Aorta (tissue), 5 donors: ENCODE measurements at regions of chr14 and their contacts with region 1.

Region 1: DNA sequence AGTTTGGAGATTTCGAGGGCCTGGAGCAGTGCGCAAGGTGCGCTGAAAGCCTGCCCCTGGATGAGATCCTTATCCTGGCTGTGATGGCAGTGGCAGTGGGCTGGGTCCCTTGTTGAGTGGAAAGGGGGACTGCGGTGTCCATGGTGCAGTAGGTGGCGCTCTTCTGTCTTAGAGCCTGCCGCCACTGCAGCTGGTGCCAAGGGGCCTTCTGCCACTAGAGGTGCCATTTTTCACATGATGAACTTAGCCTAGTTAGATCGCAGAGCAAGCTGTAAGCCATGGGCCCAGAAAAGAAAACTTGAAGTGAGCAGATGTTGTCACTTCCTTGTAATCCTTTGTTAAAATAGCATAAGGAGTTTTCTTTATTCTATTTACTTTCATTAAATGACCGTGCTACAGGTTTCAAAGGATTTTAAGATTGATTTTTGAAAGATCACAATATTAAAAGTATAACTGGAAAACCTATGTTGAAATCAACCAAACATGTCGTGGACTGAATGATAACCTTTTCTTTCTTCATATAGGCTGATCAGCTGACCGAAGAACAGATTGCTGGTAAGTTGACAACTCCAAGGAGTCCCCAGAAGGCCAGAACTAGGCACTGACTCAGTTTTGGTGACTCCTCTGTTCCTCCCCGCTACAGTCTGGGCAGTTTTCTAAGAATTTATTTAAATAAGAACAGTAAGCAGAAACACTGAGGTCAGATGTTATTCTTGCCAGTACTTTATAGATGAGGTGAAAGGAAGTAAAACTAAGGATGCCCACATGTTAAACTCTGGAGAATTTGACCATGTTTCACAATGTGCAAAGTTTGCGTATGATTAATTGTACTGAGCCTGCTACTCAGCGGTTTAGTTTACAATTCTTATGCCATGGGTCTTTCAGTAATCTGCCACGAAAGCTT is 3.0 kb downstream of the CALM1 start:
- DNase-seq: peak; percentile 94
- ATAC-seq: peak; percentile 86
- H3K4me3 ChIP-seq: peak overlapping the region; percentile 77 to 99
- H3K27ac ChIP-seq: peak overlapping the region; percentile 30 to 40
- H3K4me1 ChIP-seq: peaks cover 0 to 4% of the 10 kb centered on the region in 2 donors
- H3K27me3 ChIP-seq: peaks cover 0 to 2% of the 10 kb centered on the region in 2 donors

Region 2: GRCh38 chr14:88831284-88831683 is 1568.5 kb before region 1 on chr14:
- intact Hi-C with region 1: loop called in 1 of 2 experiments (anchors 10 kb)
- DNase-seq: peak in 1 of 2 donors; percentile 53
- ATAC-seq: peak; percentile 71
- H3K4me3 ChIP-seq: no peak overlapping the region
- H3K27ac ChIP-seq: peak overlapping the region; percentile 43 to 77
- H3K4me1 ChIP-seq: peaks cover 0 to 5% of the 10 kb centered on the region in 2 donors
- H3K27me3 ChIP-seq: no peaks in the 10 kb centered on the region

Region 3: GRCh38 chr14:89641495-89642175 is 758.2 kb before region 1 on chr14:
- intact Hi-C with region 1: no loop called
- DNase-seq: no peak
- ATAC-seq: no peak
- H3K4me3 ChIP-seq: no peak overlapping the region
- H3K27ac ChIP-seq: no peak overlapping the region
- H3K4me1 ChIP-seq: no peaks in the 10 kb centered on the region
- H3K27me3 ChIP-seq: no peaks in the 10 kb centered on the region

Region 4: DNA sequence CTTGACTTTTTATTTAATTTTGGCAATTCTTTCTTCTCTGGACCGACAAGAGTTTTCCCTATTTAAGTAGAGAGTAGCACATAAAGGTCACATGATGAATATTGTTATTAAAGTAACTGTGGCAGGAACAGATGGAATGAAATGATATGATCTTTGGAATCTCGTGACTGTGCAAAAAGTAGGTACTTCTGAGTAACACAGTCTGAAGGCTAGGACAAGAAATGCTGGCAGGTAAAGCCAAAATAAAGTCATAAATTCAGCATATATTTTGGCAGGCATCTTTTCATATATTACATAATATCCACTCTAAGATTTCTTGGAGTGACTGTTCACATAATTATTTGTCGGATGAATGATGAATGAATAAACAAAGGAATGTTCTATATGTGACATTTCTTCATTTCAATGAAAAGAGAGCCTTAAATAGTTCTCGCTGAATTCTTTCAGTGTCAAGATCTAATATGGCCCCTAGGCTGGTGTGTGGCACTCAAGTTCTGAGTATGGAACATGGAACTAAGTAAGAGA is 566.6 kb before region 1 on chr14:
- intact Hi-C with region 1: no loop called
- DNase-seq: no peak
- ATAC-seq: no peak
- H3K4me3 ChIP-seq: no peak overlapping the region
- H3K27ac ChIP-seq: no peak overlapping the region
- H3K4me1 ChIP-seq: no peaks in the 10 kb centered on the region
- H3K27me3 ChIP-seq: no peaks in the 10 kb centered on the region

Region 5: GRCh38 chr14:90331497-90332435 is 68.0 kb before region 1 on chr14 and contains the start of gene NRDE2:
- intact Hi-C with region 1: loop called in 1 of 2 experiments (anchors 5 kb)
- DNase-seq: peak; percentile 100
- ATAC-seq: peak; percentile 100
- H3K4me3 ChIP-seq: peak within 1 kb of the TSS; percentile 12 to 46
- H3K27ac ChIP-seq: peak within 1 kb of the TSS in 1 of 2 donors; percentile 34
- H3K4me1 ChIP-seq: peaks cover 0 to 2% of the 10 kb centered on the region in 2 donors
- H3K27me3 ChIP-seq: no peaks in the 10 kb centered on the region
- total RNA-seq, gene NRDE2: 20.4 to 28.5 TPM

Region 6: DNA sequence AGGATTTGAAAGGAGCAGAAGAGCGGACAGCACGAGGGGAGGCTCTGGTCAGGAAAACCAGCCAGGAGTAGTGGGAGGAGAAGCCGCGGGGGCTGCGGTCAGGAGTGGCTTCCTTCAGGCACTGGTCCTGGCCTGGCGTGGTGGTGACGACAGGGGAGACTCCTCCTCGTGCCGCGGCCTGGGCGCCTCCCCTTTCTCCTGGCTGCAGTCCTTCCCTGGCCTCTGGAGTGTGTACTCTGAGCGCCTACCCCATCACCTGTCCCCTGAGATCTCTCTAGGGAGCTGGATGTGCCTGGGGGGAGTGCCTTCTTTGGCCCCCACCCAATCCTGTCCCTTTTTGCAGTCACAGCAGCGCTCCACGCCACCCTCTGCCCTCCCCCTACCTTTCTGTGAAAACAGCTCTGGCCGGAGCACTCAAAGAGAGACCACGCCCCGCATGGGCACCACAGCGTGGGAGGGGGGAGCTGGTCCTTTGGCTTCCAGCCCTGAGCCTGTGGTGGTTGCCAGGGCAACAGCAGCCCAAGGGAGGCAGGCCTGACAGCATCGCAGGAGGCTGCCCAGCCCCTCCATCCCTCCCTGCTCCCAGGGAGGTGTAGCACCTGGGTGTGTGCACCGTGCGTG is 122.9 kb after region 1 on chr14:
- intact Hi-C with region 1: loop called in 1 of 2 experiments (anchors 5 kb)
- DNase-seq: peak; percentile 85 to 92
- ATAC-seq: peak; percentile 81
- H3K4me3 ChIP-seq: no peak overlapping the region
- H3K27ac ChIP-seq: peak overlapping the region in 1 of 2 donors; percentile 74
- H3K4me1 ChIP-seq: no peaks in the 10 kb centered on the region
- H3K27me3 ChIP-seq: no peaks in the 10 kb centered on the region

Region 7: GRCh38 chr14:90599748-90600507 is 200.1 kb after region 1 on chr14:
- intact Hi-C with region 1: loop called in 1 of 2 experiments (anchors 2 kb)
- DNase-seq: no peak
- ATAC-seq: peak; percentile 45
- H3K4me3 ChIP-seq: no peak overlapping the region
- H3K27ac ChIP-seq: no peak overlapping the region
- H3K4me1 ChIP-seq: no peaks in the 10 kb centered on the region
- H3K27me3 ChIP-seq: no peaks in the 10 kb centered on the region

Region 8: GRCh38 chr14:90677484-90678050 is 277.8 kb after region 1 on chr14:
- intact Hi-C with region 1: loop called in 1 of 2 experiments (anchors 5 kb)
- DNase-seq: no peak
- ATAC-seq: no peak
- H3K4me3 ChIP-seq: no peak overlapping the region
- H3K27ac ChIP-seq: peak overlapping the region; percentile 45 to 55
- H3K4me1 ChIP-seq: no peaks in the 10 kb centered on the region
- H3K27me3 ChIP-seq: no peaks in the 10 kb centered on the region

Region 9: DNA sequence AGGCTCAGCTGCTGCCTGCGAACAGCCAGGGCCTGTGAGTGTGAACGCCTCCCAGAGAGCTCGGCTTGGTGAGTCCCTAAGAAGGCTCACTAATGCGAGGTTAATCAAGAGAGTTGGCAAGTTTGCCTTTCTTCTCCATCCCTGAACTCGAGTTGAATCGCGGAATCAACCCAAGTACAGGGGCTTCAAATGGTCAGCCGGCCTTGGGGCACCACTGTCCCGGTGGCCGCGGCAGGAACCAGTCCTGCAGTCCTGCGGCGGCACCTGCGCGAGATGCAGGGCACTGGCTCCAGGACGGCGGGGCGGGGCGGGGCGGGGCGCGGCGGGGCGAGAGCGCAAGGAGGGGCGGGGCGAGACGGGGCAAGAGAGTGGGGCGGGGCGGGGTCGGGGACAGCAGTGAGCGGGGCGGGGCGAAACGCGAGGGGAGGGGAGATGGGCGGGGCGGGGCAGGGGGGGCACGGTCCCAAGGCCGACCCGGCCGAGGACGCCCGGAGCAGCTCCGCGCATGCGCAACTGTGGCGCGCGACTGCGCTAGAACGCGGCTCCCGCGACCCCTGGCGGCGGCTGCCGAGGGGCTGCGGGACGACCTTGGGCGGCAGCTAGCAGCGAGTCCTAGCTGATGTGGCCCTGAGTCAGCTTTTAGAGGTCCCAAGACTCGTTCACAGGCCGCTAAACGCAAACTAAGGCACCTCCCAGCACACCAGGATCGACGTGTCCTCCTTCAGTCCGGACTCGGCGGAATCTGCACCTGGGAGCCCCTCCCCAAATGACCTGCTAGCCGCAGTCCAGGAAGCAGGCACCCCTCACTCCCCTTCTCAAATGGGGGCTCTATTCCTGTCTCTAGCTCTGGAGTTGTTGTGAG is 358.5 kb after region 1 on chr14:
- intact Hi-C with region 1: loop called in 1 of 2 experiments (anchors 5 kb)
- DNase-seq: peak; percentile 94 to 98
- ATAC-seq: peak; percentile 95
- H3K4me3 ChIP-seq: peak overlapping the region in 1 of 2 donors; percentile 56
- H3K27ac ChIP-seq: peak overlapping the region; percentile 89 to 92
- H3K4me1 ChIP-seq: peaks cover 1 to 4% of the 10 kb centered on the region in 2 donors
- H3K27me3 ChIP-seq: no peaks in the 10 kb centered on the region